ENCODE measurements at regions of chr9 and their contacts with region 1.

Region 1: DNA sequence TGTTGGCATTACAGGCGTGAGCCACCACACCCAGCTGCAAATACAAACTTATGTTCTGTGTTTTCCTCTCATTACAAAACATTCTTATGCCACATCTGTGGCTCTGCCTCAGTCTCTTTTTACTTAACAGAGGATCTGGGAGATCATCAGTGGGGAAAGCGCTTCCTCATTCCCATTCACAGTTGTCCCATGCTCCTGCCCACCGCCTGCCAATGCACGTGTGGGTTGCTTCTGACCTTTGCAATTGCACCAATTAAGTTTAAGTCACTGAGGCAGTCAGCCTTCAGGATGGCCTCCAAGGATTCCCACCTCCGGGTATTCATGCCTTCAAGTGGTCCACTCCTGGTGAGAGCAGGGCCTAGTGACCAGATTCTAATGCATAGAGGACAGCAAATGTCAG is 34.9 kb upstream of the EEIG1 start:
- DNase-seq: no peak
- H3K4me3 ChIP-seq: no peak overlapping the region
- H3K27ac ChIP-seq: no peak overlapping the region
- H3K4me1 ChIP-seq: no peaks in the 10 kb centered on the region
- H3K27me3 ChIP-seq: no peaks in the 10 kb centered on the region
- CTCF ChIP-seq: no peak
- EP300 ChIP-seq: no peak
- POLR2A ChIP-seq: no peak

Region 2: GRCh38 chr9:127955294-127956035 is 60.2 kb before region 1 on chr9:
- intact Hi-C with region 1: no loop called
- DNase-seq: peak in 1 of 5 donors; percentile 47
- H3K4me3 ChIP-seq: no peak overlapping the region
- H3K27ac ChIP-seq: no peak overlapping the region
- H3K4me1 ChIP-seq: peaks cover 26% of the 10 kb centered on the region
- H3K27me3 ChIP-seq: no peaks in the 10 kb centered on the region
- CTCF ChIP-seq: no peak
- EP300 ChIP-seq: no peak
- POLR2A ChIP-seq: no peak

Region 3: DNA sequence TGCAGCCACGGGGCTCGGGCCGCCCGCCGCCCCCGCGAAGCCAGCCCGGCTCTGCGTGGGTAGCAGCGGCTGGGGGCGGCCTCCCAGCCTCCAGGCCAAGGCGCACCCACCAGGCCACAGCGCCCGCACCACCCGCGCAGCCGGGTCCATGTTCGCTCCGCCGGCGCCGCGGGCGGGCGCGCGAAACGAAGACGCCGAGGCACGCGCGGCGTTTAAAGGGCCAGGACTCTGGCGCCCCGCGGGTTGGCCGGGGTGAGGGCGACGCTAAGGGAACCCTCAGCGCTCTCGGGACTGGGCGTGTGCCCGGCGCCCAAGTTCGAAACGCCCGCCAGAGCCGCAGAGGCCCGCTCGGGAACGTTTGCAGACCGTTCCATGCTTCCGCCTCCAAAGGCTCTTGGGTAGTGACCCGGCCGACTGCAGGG is 111.9 kb after region 1 on chr9 and contains the start of gene PTGES2:
- intact Hi-C with region 1: no loop called
- DNase-seq: peak; percentile 75 to 90 (median 79)
- H3K4me3 ChIP-seq: peak within 1 kb of the TSS; percentile 86
- H3K27ac ChIP-seq: peak within 1 kb of the TSS; percentile 84 to 96
- H3K4me1 ChIP-seq: peaks cover 9% of the 10 kb centered on the region
- H3K27me3 ChIP-seq: no peaks in the 10 kb centered on the region
- CTCF ChIP-seq: no peak
- EP300 ChIP-seq: no peak
- POLR2A ChIP-seq: peak; percentile 14
- total RNA-seq, gene PTGES2: 33.7 to 69.5 (median 61.3) TPM

Region 4: DNA sequence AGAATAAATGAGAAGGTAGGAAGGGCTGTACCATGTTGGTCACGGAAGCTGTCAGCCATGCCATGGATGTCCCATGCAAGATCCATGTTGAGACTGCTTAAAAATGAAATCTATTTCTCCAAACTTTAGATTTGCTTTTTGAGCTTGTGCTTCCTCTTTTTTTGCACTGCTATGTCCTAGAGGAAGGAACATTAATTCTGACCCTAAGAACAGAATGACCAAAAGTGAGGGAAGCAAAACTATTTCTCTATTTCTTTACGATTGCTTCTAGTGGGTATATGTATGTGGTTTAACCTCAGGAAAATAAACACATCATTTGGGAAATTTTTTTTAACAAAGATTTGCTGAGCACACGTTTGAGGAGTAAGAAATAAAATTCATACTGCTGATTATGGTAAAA is 1904.1 kb after region 1 on chr9:
- intact Hi-C with region 1: loop called in 1 of 4 experiments (anchors 5 kb)
- DNase-seq: no peak
- H3K4me3 ChIP-seq: no peak overlapping the region
- H3K27ac ChIP-seq: no peak overlapping the region
- H3K4me1 ChIP-seq: no peaks in the 10 kb centered on the region
- H3K27me3 ChIP-seq: no peaks in the 10 kb centered on the region
- CTCF ChIP-seq: no peak
- EP300 ChIP-seq: no peak
- POLR2A ChIP-seq: no peak